Psoas muscle (tissue), 8 donors: ENCODE measurements at regions of chr7 and their contacts with region 1.

Region 1: DNA sequence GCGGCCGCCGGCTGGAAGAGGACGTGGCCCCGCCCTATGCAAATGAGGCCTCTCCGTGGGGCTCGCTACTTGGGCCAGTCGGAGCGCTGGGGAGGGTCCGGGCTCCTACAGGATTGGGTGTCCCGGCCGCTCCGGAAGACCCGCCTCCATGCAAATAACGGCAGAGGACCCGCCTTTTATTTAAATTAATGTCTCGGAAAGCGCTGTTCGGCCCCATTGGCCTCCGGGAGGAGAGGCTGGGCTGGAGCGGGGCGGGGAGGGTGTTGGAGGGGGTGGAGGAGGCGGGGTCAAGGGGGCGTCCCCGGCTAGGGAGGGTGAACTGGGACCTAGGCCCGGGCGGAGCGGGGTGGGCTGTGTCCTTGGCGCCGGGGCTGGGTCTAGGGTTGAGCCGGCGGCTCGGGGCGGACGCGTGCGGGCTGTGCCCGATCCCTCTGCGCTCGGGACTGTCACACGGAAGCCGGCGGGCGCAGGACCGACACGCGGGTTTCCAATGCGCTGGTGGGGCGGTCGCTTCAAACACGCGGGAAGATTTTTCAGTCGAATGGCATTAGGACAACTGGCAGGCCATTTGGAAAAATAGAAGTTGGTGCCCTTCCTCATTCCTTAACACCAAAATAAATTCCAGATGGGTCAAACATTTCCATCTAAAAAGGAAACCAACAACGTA is 344 bp upstream of the POLM start:
- DNase-seq: peak; percentile 99 to 100
- ATAC-seq: peak; percentile 94 to 96 (median 94)
- H3K4me3 ChIP-seq: peak overlapping the region; percentile 73
- H3K27ac ChIP-seq: peak overlapping the region; percentile 83
- H3K4me1 ChIP-seq: peaks cover 35% of the 10 kb centered on the region
- H3K27me3 ChIP-seq: no peaks in the 10 kb centered on the region
- CTCF ChIP-seq: no peak

Region 2: DNA sequence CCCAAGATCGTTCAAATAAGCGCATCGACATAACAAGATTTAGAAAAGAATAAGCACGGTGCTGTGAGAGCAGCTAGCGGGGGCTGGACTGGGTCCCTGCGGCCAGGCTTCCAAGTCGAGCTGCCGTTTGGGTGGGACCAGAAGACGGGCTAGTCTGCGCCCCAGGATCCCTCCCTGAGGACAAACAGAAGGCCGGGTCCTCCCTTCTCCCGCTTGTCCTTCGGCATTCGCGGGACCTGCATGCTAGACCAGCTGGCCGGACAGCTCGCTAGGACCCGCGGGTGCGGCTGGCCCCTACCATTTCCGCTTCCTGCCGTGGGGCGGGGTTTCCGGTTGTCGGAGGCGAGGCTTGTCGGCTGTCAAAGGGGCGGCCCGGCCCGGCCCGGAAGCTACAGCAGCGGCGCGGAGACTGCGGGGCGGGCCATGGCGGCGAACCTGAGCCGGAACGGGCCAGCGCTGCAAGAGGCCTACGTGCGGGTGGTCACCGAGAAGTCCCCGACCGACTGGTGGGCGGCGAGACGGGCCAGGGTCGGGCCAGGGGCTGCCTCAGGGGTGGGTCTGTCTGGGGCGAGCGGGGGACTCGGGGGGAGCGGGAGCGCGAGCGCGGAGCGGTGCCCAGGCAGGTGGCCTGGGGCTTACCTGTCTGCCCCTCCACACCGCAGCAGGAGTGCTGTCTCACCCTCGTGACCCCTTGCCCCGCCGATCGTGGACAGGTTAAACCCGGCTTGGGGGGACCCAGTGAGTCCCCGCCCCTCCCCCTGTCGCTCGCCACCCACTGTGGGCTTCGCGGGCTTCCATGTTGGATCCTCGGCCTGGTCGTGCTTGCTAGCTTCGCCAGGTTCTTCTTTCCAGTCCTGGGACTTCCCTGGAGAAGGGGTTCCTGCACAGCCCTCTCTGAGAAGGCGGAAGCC is 38.1 kb before region 1 on chr7 and contains the start of gene DBNL:
- intact Hi-C with region 1: loop called in 1 of 2 experiments (anchors 5 kb)
- DNase-seq: peak; percentile 96 to 97
- ATAC-seq: peak; percentile 91 to 96 (median 94)
- H3K4me3 ChIP-seq: peak within 1 kb of the TSS; percentile 91
- H3K27ac ChIP-seq: peak within 1 kb of the TSS; percentile 94
- H3K4me1 ChIP-seq: peaks cover 25% of the 10 kb centered on the region
- H3K27me3 ChIP-seq: no peaks in the 10 kb centered on the region
- CTCF ChIP-seq: no peak
- total RNA-seq, gene DBNL: 33.4 to 45.1 (median 38.7) TPM

Region 3: DNA sequence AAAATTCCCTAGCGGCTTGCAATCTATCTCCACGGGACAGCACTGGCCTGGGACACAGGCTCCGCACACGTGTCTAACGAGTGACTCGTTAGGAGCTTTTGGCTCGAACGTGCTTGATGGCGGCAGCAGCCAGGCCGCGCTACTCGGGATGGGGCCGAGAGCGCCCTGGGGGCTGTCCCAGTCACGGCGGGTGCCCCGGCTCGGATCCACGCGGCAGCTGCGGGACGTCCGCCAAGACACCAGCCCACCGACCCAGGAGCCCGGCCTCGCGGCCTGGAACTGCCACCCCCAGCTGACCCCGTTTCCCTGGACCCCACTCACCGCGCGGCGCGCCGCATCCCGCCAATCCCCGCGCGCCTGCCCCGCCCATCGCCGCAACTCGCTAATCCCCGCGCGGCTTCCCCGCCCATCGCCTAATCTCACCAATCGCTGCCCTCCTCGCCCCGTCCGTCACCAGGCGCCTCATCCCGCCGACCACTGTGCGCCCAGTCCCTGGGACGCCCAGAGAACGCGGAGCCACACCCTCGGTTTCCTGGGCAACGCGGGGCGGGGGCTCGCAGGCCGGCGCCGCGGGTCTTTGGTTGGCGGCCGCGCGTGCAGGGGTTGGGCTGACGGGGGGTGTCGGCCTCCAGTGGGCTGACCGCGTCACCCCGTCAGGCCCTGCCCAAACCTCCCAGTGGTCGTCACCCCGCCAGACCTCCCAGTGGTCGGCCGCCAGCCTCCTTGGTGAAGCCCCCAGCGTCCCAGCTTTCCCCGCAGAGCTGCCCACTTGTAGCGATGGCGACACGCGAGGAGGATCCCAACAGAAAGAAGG is 40.7 kb after region 1 on chr7 and contains the start of gene POLD2:
- intact Hi-C with region 1: loop called (anchors 5 kb)
- DNase-seq: peak; percentile 99
- ATAC-seq: peak; percentile 96 to 98 (median 96)
- H3K4me3 ChIP-seq: peak within 1 kb of the TSS; percentile 89
- H3K27ac ChIP-seq: peak within 1 kb of the TSS; percentile 93
- H3K4me1 ChIP-seq: peaks cover 25% of the 10 kb centered on the region
- H3K27me3 ChIP-seq: no peaks in the 10 kb centered on the region
- CTCF ChIP-seq: no peak
- total RNA-seq, gene POLD2: 79.2 to 127 (median 119) TPM

Region 4: DNA sequence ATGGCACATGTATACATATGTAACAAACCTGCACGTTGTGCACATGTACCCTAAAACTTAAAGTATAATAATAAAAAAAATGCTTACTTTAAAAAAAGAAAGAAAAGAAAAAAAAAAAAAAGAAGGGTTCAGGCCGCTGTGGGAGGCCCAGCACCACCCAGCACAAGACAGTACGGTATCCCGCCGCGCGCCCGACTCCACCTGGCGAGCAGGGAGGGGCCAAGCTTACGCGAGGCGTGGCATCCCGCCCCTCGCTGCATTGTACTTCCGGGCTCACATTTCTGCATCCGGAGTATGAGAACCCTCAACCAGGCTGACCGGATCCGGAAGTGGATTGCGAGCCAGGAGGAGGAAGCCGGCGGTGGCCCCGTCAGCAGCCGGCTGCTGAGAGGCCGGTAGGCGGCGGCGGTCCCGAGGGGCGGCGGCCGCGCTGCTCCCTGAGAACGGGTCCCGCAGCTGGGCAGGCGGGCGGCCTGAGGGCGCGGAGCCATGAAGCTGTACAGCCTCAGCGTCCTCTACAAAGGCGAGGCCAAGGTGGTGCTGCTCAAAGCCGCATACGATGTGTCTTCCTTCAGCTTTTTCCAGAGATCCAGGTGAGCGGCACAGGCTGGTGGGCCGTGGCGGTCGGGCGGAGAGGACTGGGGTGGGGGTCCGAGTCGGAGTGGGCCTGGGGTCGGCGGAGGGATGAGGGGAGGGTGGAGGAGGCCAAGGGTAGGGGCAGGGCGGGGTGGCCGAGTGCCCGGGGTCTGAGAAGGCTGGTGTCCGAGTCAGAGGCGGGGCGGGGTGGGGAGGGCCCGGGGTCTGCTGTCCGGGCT is 118.2 kb after region 1 on chr7 and contains the start of gene YKT6:
- intact Hi-C with region 1: loop called in 1 of 2 experiments (anchors 5 kb)
- DNase-seq: peak; percentile 91 to 96
- ATAC-seq: peak; percentile 99
- H3K4me3 ChIP-seq: peak within 1 kb of the TSS; percentile 91
- H3K27ac ChIP-seq: peak within 1 kb of the TSS; percentile 82
- H3K4me1 ChIP-seq: peaks cover 10% of the 10 kb centered on the region
- H3K27me3 ChIP-seq: no peaks in the 10 kb centered on the region
- CTCF ChIP-seq: peak; percentile 59
- total RNA-seq, gene YKT6: 49.7 to 69.4 (median 63.7) TPM